CD14-positive monocyte (primary cell): ENCODE measurements at regions of chr1 and their contacts with region 1.

Region 1: GRCh38 chr1:10387413-10388079 is 11.3 kb upstream of the PGD start:
- DNase-seq: peak in 2 of 3 donors; percentile 7 to 20
- H3K4me3 ChIP-seq: peak overlapping the region in 1 of 3 experiments; percentile 66
- H3K4me3 Mint-ChIP-seq: no peak overlapping the region
- H3K27ac ChIP-seq: peak overlapping the region; percentile 61 to 85
- H3K27ac Mint-ChIP-seq: peak overlapping the region; percentile 79 to 96 (median 86)
- H3K4me1 ChIP-seq: peaks cover 31 to 42% of the 10 kb centered on the region in 2 donors
- H3K4me1 Mint-ChIP-seq: peaks cover 42% of the 10 kb centered on the region
- H3K27me3 ChIP-seq: no peaks in the 10 kb centered on the region
- H3K27me3 Mint-ChIP-seq: peaks cover 0 to 1% (median 0%) of the 10 kb centered on the region in 3 donors
- CTCF ChIP-seq: no peak

Region 2: DNA sequence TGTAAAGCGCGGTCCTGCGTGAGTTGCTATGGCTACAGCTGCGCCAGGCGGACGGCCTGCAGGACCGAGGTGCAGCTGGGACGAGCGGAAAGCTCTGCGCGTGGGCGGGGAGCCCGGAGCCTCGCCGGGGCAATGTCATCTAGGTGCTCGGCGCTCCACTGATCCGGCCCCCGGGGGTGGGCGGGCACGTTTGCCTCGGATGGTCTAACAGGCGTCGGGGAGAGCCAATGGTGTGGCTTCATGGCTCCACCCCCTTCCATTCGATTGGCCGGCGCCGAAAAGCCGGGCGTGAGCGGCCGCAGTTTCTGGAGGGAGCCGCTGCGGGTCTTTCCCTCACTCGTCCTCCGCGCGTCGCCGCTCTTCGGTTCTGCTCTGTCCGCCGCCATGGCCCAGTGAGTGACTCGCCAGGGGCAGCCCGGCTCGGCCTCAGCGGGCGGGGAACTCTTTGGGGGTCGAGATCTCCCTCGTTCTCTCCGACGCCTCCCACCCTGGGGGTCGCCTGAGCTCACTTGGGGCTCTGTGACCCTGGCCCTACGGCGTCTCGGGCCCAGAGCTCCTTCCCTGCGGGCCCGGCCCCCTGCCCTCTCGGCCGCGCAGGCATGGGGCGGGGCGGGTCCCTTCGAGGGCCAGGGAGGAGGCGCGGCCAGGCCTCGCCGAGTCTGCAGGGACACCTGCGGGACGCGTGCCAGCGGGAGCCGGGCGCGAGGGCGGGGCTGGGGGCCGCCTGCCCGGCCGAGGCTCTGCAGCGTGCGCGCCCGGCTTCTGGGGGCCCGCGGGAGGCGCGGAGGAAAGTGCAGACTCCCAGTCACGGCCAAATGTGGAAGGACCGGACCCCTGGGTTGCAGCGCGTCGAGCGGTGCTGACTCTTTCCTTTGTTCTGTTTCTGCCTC is 11.4 kb after region 1 on chr1 and contains the start of gene PGD:
- intact Hi-C with region 1: loop called in 1 of 2 experiments (anchors 1 kb)
- DNase-seq: peak; percentile 94 to 96 (median 95)
- H3K4me3 ChIP-seq: peak within 1 kb of the TSS; percentile 69 to 98 (median 87)
- H3K4me3 Mint-ChIP-seq: peak within 1 kb of the TSS; percentile 94 to 99
- H3K27ac ChIP-seq: peak within 1 kb of the TSS; percentile 75 to 83
- H3K27ac Mint-ChIP-seq: peak within 1 kb of the TSS; percentile 87 to 98 (median 96)
- H3K4me1 ChIP-seq: peaks cover 25 to 31% of the 10 kb centered on the region in 2 donors
- H3K4me1 Mint-ChIP-seq: peaks cover 38% of the 10 kb centered on the region
- H3K27me3 ChIP-seq: no peaks in the 10 kb centered on the region
- H3K27me3 Mint-ChIP-seq: no peaks in the 10 kb centered on the region
- CTCF ChIP-seq: no peak
- polyA plus RNA-seq, gene PGD: 173 to 509 (median 471) TPM

Region 3: GRCh38 chr1:10472220-10473144 is 84.9 kb after region 1 on chr1 and contains the start of gene DFFA:
- intact Hi-C with region 1: loop called (anchors 5 to 10 kb)
- DNase-seq: peak; percentile 86 to 90 (median 86)
- H3K4me3 ChIP-seq: peak within 1 kb of the TSS; percentile 42 to 93 (median 85)
- H3K4me3 Mint-ChIP-seq: peak within 1 kb of the TSS; percentile 90 to 91
- H3K27ac ChIP-seq: peak within 1 kb of the TSS in 1 of 2 donors; percentile 65
- H3K27ac Mint-ChIP-seq: peak within 1 kb of the TSS in 6 of 7 donors; percentile 53 to 92 (median 79)
- H3K4me1 ChIP-seq: peaks cover 40 to 52% of the 10 kb centered on the region in 2 donors
- H3K4me1 Mint-ChIP-seq: peaks cover 44% of the 10 kb centered on the region
- H3K27me3 ChIP-seq: no peaks in the 10 kb centered on the region
- H3K27me3 Mint-ChIP-seq: no peaks in the 10 kb centered on the region
- CTCF ChIP-seq: no peak
- polyA plus RNA-seq, gene DFFA: 11.0 to 17.8 (median 17.3) TPM

Region 4: GRCh38 chr1:10585948-10586524 is 198.5 kb after region 1 on chr1:
- intact Hi-C with region 1: no loop called
- DNase-seq: no peak
- H3K4me3 ChIP-seq: no peak overlapping the region
- H3K4me3 Mint-ChIP-seq: no peak overlapping the region
- H3K27ac ChIP-seq: no peak overlapping the region
- H3K27ac Mint-ChIP-seq: no peak overlapping the region
- H3K4me1 ChIP-seq: peaks cover 0 to 8% of the 10 kb centered on the region in 2 donors
- H3K4me1 Mint-ChIP-seq: peaks cover 7% of the 10 kb centered on the region
- H3K27me3 ChIP-seq: no peaks in the 10 kb centered on the region
- H3K27me3 Mint-ChIP-seq: no peaks in the 10 kb centered on the region
- CTCF ChIP-seq: no peak